ENCODE measurements at regions of chr13 and their contacts with region 1.

Region 1: DNA sequence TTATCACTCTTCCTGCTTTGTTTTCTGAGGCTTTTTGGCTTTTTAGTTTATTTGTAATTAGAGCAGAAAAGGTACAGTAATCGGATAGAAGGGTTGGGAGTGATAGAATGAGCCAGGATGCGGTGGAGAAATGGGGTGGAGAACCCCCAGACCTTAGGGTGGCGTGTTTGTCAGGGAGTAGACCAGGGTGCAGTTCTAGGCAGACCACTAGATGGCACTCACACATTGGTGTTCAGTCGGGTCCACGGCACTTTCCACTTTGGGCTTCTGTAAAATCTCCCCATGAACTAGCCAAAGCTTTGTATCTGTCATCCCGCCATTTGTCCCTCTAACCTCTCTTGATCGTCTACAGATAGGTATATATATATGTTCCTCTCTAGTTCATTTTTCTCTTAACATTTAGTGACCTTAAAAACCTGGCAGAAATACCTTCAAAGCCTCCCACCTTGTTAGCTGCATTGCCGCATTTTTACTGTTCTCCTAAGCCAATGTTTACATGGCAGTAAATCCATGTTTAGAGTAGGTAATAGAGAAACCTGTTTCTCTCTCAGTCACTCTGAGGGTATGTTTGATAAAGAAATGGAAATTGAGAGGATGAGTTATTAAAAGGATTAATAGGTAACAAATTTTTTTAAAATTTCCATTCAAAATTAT is 154.9 kb downstream of the TM9SF2 start:
- DNase-seq: peak; percentile 59
- H3K4me3 ChIP-seq: no peak overlapping the region
- H3K27ac ChIP-seq: no peak overlapping the region
- H3K4me1 ChIP-seq: peaks cover 14% of the 10 kb centered on the region
- H3K27me3 ChIP-seq: peaks cover 2 to 6% of the 10 kb centered on the region in 2 experiments
- CTCF ChIP-seq: peak; percentile 87 to 92
- POLR2A ChIP-seq: no peak

Region 2: GRCh38 chr13:99916366-99917103 is 260.3 kb after region 1 on chr13:
- CTCF ChIA-PET with region 1: interaction called, 5 read pairs
- POLR2A ChIA-PET with region 1: no interaction called
- dilution Hi-C with region 1: no loop called
- intact Hi-C with region 1: loop called (anchors 1 kb)
- DNase-seq: peak; percentile 72
- H3K4me3 ChIP-seq: no peak overlapping the region
- H3K27ac ChIP-seq: no peak overlapping the region
- H3K4me1 ChIP-seq: no peaks in the 10 kb centered on the region
- H3K27me3 ChIP-seq: peaks cover 0 to 10% of the 10 kb centered on the region in 2 experiments
- CTCF ChIP-seq: peak; percentile 78 to 83
- POLR2A ChIP-seq: no peak

Region 3: GRCh38 chr13:100235311-100235901 is 579.2 kb after region 1 on chr13:
- CTCF ChIA-PET with region 1: interaction called, 18 read pairs
- POLR2A ChIA-PET with region 1: no interaction called
- dilution Hi-C with region 1: no loop called
- intact Hi-C with region 1: loop called (anchors 1 kb)
- DNase-seq: peak; percentile 67
- H3K4me3 ChIP-seq: no peak overlapping the region
- H3K27ac ChIP-seq: no peak overlapping the region
- H3K4me1 ChIP-seq: peaks cover 17% of the 10 kb centered on the region
- H3K27me3 ChIP-seq: no peaks in the 10 kb centered on the region
- CTCF ChIP-seq: peak; percentile 25 to 38
- POLR2A ChIP-seq: no peak

Region 4: DNA sequence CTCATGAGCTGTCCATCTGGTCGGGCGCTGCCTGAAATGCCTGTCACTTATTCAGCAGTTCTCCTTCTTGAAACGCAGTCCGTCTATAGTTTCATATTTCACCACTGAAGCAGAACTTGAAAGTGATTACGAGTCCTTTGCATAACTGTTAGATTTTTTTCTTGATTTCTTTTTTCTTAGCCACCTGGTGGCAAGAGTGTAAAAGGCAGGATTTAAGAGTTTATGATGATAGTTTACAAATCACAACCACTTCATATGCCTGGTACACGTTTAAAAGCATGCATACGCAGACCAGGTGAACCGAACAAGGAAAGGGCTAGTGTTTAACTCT is 886.6 kb after region 1 on chr13:
- CTCF ChIA-PET with region 1: no interaction called
- POLR2A ChIA-PET with region 1: no interaction called
- dilution Hi-C with region 1: no loop called
- intact Hi-C with region 1: loop called (anchors 1 kb)
- DNase-seq: peak; percentile 52
- H3K4me3 ChIP-seq: no peak overlapping the region
- H3K27ac ChIP-seq: no peak overlapping the region
- H3K4me1 ChIP-seq: peaks cover 13% of the 10 kb centered on the region
- H3K27me3 ChIP-seq: no peaks in the 10 kb centered on the region
- CTCF ChIP-seq: peak; percentile 28 to 35
- POLR2A ChIP-seq: no peak

Region 5: DNA sequence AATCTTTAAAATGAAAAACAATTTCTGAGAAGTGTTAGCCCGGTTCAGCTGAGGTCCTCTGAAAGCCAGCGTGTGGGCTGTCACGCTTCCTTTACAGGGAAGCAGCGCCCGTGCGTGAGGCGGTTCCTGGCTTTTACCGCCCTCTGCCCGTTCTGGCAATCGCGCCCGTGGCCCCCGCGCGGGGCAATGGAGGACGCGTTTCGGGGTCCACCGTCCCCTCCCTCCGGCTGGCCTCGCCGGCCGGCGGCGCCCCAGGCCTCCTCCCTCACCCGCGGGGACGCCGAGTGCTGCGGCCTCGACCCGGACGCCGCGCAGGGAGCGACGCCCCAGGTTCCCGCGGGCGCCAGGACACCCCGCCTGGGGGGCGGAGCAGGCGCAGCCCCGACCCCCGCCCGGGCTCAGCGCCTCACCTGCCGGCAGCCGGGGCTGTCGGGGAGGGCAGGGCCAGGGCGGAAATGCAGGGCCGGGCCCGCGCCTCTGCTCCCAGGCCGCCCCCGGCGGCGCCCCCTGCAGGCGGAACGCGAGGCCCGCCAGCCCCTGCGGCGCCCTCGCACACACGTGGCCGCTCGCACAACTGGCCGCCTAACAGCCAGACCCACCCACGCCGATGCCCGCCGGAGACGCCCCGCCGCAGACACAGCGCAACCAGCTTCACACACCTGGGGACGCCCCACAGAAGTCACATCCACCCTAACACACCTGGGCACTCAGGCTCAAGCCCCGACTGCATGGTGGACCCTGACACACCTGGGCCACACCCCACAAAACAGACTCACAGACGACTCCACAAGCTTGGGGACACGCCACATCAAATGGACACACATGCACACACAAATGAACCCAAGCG is 932.3 kb after region 1 on chr13 and contains the start of gene GGACT:
- CTCF ChIA-PET with region 1: no interaction called
- POLR2A ChIA-PET with region 1: no interaction called
- dilution Hi-C with region 1: no loop called
- intact Hi-C with region 1: loop called (anchors 1 kb)
- DNase-seq: peak; percentile 56
- H3K4me3 ChIP-seq: peak within 1 kb of the TSS; percentile 27 to 67 (median 57)
- H3K27ac ChIP-seq: peak within 1 kb of the TSS; percentile 33
- H3K4me1 ChIP-seq: peaks cover 15% of the 10 kb centered on the region
- H3K27me3 ChIP-seq: no peaks in the 10 kb centered on the region
- CTCF ChIP-seq: peak; percentile 72 to 92
- POLR2A ChIP-seq: no peak
- total RNA-seq, gene GGACT: 5.4 and 6.5 TPM in 2 replicates

Region 6: DNA sequence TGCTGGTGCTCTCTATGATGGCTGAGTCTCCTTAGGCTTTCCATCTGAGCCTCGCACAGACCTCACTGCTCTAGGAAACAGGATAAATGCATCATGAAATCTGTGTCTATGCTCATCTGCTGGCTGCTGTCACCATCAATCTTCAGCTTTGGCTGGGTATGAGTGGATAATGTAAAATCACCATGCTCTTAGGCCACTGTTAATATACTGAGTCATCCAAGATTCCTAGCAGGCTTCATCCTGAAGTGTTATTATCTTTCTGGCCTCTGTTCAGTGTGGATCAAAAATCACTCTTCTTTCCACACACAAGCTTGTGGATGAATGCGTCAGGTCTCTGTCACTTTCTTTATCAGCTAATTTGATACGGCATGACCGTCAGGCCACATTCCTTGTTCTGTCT is 1442.7 kb after region 1 on chr13:
- CTCF ChIA-PET with region 1: interaction called, 16 read pairs
- POLR2A ChIA-PET with region 1: no interaction called
- dilution Hi-C with region 1: no loop called
- intact Hi-C with region 1: loop called (anchors 1 kb)
- DNase-seq: no peak
- H3K4me3 ChIP-seq: no peak overlapping the region
- H3K27ac ChIP-seq: no peak overlapping the region
- H3K4me1 ChIP-seq: no peaks in the 10 kb centered on the region
- H3K27me3 ChIP-seq: no peaks in the 10 kb centered on the region
- CTCF ChIP-seq: no peak
- POLR2A ChIP-seq: no peak

Measured in endothelial cell of umbilical vein (primary cell).